Activated T-helper 1 cell treated with anti-CD3 and anti-CD28 coated beads, Interleukin-12 subunit alpha, Interleukin-12 subunit beta, Interleukin-2, Interleukin-4 antibody, amounts not matched to agents 30 ng/mL and 10 ng/mL and 1 ng/mL, durations not matched to agents 14 hours and 24 hours and 36 hours (primary cell): ENCODE measurements at regions of chr3 and their contacts with region 1.

Region 1: GRCh38 chr3:128322066-128323022 is 144.3 kb downstream of the DNAJB8 start:
- DNase-seq: peak; percentile 31
- H3K4me3 Mint-ChIP-seq: no peak overlapping the region
- H3K27ac Mint-ChIP-seq: no peak overlapping the region
- H3K4me1 Mint-ChIP-seq: peaks cover 17% of the 10 kb centered on the region
- H3K27me3 Mint-ChIP-seq: no peaks in the 10 kb centered on the region

Region 2: DNA sequence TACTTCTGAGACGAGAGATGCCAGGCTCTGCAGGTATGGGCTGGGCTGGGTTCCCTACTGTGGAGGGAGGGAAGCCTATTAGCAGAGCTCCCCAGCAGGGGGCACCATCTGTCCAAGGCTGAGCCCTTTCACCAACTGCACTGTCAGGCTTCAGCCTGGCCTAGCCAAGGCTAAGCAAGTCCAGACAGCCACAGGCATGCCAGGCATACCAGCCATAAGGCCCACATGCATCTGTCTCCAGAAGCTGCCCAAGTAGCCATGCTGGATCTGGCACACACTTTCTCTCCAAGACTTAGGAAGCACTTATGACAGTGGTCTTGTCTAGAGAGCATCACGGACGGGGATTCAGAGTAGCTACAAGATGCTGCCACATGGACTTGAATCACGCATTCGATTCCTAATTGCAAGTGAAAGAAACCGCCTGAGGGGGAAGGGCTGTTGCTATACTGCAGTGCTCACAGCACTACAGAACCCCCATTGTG is 227.1 kb before region 1 on chr3:
- intact Hi-C with region 1: loop called (anchors 1 kb)
- DNase-seq: peak; percentile 66
- H3K4me3 Mint-ChIP-seq: no peak overlapping the region
- H3K27ac Mint-ChIP-seq: no peak overlapping the region
- H3K4me1 Mint-ChIP-seq: peaks cover 19% of the 10 kb centered on the region
- H3K27me3 Mint-ChIP-seq: no peaks in the 10 kb centered on the region